ENCODE measurements at regions of chr16 and their contacts with region 1.

Region 1: DNA sequence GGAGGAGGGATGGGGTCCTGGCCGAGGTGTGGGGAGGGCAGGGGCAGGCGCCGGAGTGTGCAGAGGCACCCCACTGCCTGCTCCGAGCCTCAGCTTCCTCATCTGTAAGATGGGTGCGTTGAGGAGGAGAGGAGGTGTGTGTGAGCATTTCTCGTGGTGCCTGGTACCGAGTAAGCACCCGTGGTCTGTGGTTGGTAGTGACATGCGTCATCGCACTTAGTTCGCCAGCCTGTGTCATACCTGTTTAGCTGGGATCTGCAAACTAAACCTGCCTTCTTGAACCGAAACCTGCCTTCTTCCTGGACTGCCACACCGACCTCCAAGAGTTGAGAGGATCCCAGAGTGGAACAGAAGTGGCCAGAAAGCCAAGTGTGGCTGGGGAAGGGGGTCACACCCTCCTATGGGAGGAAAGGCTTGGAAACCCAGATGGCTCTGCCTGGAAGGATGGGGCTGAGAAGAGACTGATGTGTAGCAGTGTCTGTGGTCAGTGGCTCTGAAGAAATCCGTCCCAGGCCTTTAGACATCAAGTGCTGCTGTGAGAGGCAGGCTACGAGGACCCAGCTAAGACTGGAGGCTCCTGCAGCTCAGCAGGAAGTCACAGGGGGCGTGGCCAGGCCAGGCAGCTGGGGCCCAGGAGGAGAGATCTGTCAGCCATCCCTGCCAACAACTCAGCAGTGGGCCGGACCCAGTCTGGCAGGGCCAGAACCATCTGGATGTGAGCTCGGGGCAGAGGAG is 162.6 kb upstream of the PLCG2 start:
- DNase-seq: peak; percentile 91
- H3K4me3 Mint-ChIP-seq: peak overlapping the region; percentile 26
- H3K27ac Mint-ChIP-seq: peak overlapping the region; percentile 92
- H3K4me1 Mint-ChIP-seq: peaks cover 18% of the 10 kb centered on the region
- H3K27me3 Mint-ChIP-seq: no peaks in the 10 kb centered on the region

Region 2: DNA sequence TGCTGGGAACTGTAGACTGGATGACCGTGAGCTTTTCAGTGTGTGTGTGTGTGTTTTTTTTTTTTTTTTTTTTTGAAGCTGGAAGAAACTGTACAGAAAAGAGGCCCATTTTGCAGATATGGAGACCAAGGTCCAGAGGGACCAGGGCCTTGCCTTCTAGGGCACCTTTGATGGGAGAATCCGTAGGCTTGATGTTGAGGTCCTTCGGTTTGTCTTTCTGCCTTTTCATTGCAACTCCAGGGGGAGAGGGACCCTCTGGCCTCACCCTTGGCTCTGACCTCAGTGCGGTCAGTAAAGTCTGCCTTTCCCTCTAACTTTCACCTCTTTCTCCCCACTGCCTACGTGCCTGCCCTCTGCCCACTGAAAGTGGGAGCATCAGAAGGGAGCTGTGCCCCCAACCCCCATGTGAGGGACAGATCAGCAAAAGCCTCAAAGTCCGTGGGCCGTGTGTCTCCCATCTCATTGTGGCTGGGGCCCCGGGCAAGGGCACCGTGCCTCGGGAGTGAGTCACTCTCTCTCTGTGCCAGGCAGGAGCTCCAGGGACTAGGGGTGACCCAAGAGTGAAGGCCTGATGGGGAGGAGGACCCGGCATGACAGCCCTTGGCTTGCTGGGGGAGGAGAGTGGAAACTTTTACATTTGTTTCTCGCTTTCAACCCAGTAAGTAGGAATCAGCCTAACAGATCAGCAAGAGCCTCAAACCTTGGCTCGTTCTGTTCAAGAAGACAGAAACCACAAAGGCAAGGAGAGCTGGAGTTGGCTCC is 48.3 kb before region 1 on chr16:
- CTCF ChIA-PET with region 1: no interaction called
- POLR2A ChIA-PET with region 1: interaction called, 4 read pairs
- intact Hi-C with region 1: loop called (anchors 1 kb)
- DNase-seq: peak; percentile 83
- H3K4me3 Mint-ChIP-seq: no peak overlapping the region
- H3K27ac Mint-ChIP-seq: peak overlapping the region; percentile 70
- H3K4me1 Mint-ChIP-seq: peaks cover 28% of the 10 kb centered on the region
- H3K27me3 Mint-ChIP-seq: no peaks in the 10 kb centered on the region

Region 3: GRCh38 chr16:81595604-81596292 is 20.7 kb before region 1 on chr16:
- CTCF ChIA-PET with region 1: no interaction called
- POLR2A ChIA-PET with region 1: interaction called, 4 read pairs
- intact Hi-C with region 1: loop called (anchors 1 kb)
- DNase-seq: no peak
- H3K4me3 Mint-ChIP-seq: no peak overlapping the region
- H3K27ac Mint-ChIP-seq: peak overlapping the region; percentile 78
- H3K4me1 Mint-ChIP-seq: peaks cover 12% of the 10 kb centered on the region
- H3K27me3 Mint-ChIP-seq: no peaks in the 10 kb centered on the region

Region 4: DNA sequence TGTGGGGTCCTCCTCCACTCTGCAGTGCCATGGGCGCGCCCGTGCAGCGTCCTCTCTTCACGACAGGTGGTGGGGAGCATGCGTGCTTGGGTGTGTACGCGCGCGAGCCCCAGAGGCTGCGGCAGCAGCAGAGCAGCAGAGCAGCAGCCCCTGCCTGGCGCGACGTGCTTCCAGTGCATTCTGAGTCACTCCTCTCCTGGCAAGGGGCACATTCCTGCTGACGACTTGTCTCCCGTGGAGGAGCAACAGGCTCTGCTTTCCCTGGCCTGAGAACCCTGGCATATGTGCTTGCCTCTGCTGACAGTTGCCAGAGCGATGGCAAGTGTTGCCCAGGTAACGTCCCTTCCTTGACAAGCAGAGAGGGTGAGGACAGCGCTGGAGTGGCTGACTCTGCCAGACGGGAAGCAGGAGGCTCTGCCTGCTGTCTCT is 28.8 kb after region 1 on chr16:
- CTCF ChIA-PET with region 1: no interaction called
- POLR2A ChIA-PET with region 1: no interaction called
- intact Hi-C with region 1: no loop called
- DNase-seq: no peak
- H3K4me3 Mint-ChIP-seq: no peak overlapping the region
- H3K27ac Mint-ChIP-seq: no peak overlapping the region
- H3K4me1 Mint-ChIP-seq: peaks cover 10% of the 10 kb centered on the region
- H3K27me3 Mint-ChIP-seq: no peaks in the 10 kb centered on the region